Activated CD4-positive, alpha-beta memory T cell treated with anti-CD3 and anti-CD28 coated beads for 36 hours (primary cell): ENCODE measurements at regions of chr5 and their contacts with region 1.

Region 1: DNA sequence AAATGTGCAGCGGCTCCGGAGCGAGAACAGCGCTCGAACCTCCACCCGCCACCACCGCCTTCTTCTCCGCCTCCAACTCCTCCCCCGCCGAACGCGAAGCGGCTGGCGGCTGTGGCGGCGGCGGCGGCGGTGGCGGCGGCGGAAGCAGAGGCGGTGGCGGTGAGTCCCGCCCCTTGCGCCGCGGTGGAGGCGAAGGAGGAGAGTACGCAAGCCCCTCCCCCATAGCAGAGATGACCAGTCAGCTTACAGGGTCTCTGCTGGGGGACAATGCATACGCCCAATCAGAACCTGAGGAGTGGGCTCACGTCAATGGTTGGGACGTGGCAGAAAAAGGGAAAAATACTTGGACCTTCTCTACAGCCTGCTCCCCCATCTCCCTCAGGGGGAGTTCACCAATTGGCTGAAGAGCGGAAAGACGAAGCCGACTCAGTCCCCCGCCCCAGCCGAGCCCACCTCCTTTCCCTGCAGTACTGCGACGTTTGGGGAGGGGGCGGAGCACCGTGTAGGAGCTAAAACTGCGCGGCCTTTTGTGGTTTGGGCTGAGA is at the start of gene PJA2:
- DNase-seq: peak; percentile 98
- H3K4me3 Mint-ChIP-seq: peak within 1 kb of the TSS; percentile 89
- H3K27ac Mint-ChIP-seq: peak within 1 kb of the TSS; percentile 97
- H3K4me1 Mint-ChIP-seq: peaks cover 37% of the 10 kb centered on the region
- H3K27me3 Mint-ChIP-seq: no peaks in the 10 kb centered on the region
- total RNA-seq, gene PJA2: 57.3 to 58.5 TPM

Region 2: DNA sequence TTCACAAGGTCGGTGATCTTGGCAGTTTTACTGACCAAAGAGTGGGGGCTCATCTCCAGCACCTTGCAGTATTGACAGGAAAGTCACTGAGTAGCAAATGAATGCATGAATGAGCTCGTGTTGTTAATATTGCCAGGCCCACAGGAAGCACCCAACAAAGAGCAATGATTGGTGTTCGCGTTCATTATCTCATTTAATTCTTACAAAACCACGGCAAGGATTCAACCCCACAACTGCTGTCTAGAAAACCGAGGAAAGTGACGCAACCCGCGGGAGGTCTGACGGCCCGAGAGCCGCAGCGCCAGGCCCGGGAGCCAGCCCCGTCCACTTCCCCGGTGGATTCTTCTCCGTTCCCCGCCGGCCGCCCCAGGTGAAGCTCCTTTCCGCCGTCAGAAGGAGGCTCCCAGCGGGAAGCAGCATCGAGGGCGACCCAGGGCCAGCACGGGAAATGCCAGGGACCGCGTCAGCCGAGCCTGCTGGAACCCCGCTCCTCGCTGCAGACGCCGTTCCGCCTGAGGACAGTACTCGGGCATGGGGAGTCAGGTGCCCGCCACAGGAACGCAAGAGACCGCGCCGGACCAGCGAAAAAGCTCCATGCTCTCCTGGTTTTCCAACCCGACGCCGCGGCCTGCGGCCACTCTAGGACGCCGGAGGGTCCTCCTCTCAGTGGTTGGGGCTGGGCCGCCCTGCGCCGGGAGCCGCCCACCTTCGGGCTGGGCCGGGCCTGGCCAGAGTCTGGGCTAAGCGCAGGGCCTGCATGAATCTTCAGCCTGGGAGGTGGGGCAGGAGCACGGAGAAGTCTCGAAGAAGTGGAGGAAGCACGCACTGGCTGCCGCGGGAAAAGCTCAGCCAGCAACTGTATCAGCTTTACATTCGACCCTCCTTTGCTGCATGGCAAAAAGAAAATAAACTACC is 682.0 kb before region 1 on chr5:
- CTCF ChIA-PET with region 1: no interaction called
- POLR2A ChIA-PET with region 1: no interaction called
- intact Hi-C with region 1: loop called (anchors 1 kb)
- DNase-seq: peak; percentile 56
- H3K4me3 Mint-ChIP-seq: peak overlapping the region; percentile 64
- H3K27ac Mint-ChIP-seq: no peak overlapping the region
- H3K4me1 Mint-ChIP-seq: peaks cover 23% of the 10 kb centered on the region
- H3K27me3 Mint-ChIP-seq: peaks cover 29% of the 10 kb centered on the region

Region 3: DNA sequence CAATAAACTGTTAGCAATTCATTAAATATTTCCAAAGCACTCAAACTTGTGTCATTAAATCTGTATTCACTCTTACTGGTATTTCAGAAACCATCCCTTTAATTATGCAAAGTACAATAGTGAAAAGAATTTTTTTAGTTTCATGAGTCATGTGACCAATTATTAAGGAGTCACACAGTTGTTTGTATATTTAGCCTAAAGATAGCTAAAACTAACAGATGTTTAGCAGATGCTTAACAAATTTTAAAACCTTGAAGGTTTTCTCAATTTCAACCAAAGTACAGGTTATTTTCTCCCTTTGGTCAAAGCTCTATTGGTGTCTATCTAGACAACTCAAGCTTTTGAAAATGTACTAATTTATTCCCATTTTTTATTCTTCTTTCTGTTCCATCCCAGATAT is 44.3 kb before region 1 on chr5:
- CTCF ChIA-PET with region 1: no interaction called
- POLR2A ChIA-PET with region 1: interaction called, 3 read pairs
- intact Hi-C with region 1: loop called (anchors 5 kb)
- DNase-seq: no peak
- H3K4me3 Mint-ChIP-seq: no peak overlapping the region
- H3K27ac Mint-ChIP-seq: no peak overlapping the region
- H3K4me1 Mint-ChIP-seq: peaks cover 22% of the 10 kb centered on the region
- H3K27me3 Mint-ChIP-seq: no peaks in the 10 kb centered on the region

Region 4: DNA sequence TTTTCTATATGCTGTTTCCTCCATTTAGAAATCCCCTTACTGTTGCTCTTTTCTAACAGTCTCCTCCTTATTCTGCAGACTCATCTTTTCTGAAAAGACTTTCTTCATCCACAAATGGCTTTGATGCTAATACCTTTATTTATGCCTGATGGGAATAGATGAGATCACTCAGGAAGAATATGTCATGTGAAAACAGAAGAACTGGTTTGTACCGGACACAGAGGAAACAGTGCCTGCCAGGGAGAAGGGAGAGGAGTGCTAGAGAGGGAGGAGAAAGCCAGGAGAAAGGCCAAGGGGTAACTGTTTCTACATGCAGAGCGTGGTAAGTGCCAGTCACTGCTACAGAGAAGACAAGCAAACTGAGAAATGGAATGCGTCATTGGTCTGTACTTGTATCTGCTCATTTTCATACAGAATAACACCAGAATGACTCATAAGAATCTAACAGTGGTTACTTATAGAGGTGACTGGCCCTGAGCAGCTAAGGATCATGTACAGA is 45.7 kb after region 1 on chr5:
- CTCF ChIA-PET with region 1: no interaction called
- POLR2A ChIA-PET with region 1: no interaction called
- intact Hi-C with region 1: loop called (anchors 1 kb)
- DNase-seq: peak; percentile 51
- H3K4me3 Mint-ChIP-seq: no peak overlapping the region
- H3K27ac Mint-ChIP-seq: peak overlapping the region; percentile 74
- H3K4me1 Mint-ChIP-seq: peaks cover 8% of the 10 kb centered on the region
- H3K27me3 Mint-ChIP-seq: peaks cover 7% of the 10 kb centered on the region

Region 5: GRCh38 chr5:110738812-110739651 is 1329.1 kb after region 1 on chr5 and contains the start of gene SLC25A46:
- CTCF ChIA-PET with region 1: no interaction called
- POLR2A ChIA-PET with region 1: no interaction called
- intact Hi-C with region 1: loop called (anchors 2 kb)
- DNase-seq: peak; percentile 93
- H3K4me3 Mint-ChIP-seq: peak within 1 kb of the TSS; percentile 91
- H3K27ac Mint-ChIP-seq: peak within 1 kb of the TSS; percentile 84
- H3K4me1 Mint-ChIP-seq: peaks cover 34% of the 10 kb centered on the region
- H3K27me3 Mint-ChIP-seq: peaks cover 5% of the 10 kb centered on the region
- total RNA-seq, gene SLC25A46: 35.4 to 37.6 TPM